GM12878 (cell line): ENCODE measurements at regions of chr22 and their contacts with region 1.

Region 1: DNA sequence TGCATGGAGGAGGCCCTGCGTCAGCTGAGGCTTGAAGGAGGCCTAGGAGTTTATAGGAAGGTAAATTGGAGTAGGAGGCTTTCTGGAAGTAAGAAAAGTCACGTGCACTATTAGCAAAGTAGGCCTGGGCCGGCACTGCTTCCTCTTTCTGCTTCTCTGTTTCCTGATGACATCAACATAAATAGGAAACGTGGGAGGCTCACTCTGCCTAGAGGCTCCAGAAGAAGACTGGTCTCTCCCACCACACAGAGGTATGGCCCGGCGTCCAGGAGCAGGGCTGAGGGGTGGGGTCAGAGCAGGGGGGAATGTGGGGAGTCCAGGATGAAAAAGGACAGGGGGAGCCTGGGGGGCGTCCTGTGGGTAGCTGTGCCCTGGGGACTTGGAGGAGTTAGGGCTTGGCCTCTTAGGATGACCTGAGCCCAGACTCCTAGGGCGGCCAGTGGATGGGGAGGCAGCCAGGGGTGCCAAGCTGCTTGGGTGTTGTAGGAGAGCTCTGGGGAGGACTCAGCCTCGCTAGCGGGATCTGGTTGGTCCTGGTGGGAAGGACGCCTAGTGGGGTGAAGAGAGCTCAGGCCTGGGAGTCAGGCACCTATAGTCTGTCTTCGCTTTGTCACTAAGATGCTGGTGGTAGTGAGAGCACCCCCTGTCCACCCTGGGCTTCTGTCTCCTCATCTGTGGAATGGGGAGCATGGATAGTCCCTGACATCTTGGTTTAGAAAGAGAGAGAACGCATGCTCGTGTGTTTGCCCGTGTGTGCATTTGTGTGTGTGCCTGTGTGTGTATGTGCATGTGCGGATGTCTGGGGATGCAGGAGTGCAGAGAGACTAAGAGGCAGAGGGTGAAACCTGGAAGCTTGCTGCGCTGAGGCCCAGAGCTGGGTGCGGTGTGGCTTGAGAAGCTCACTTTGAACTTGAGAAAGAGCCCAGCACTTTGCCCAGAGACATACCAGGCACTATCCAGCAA is at the start of gene CSF2RB:
- DNase-seq: no peak
- ATAC-seq: peak; percentile 78
- H3K4me3 ChIP-seq: peak within 1 kb of the TSS; percentile 67
- H3K27ac ChIP-seq: peak within 1 kb of the TSS; percentile 68
- H3K4me1 ChIP-seq: peaks cover 23% of the 10 kb centered on the region; the same call in 1 of the 2 replicates
- H3K27me3 ChIP-seq: no peaks in the 10 kb centered on the region
- CTCF ChIP-seq: no peak
- EP300 ChIP-seq: no peak
- POLR2A ChIP-seq: peak; percentile 6; the same call in 1 of the 2 replicates
- RAD21 ChIP-seq: no peak
- polyA plus RNA-seq, gene CSF2RB: 0.82 to 1.5 TPM

Region 2: DNA sequence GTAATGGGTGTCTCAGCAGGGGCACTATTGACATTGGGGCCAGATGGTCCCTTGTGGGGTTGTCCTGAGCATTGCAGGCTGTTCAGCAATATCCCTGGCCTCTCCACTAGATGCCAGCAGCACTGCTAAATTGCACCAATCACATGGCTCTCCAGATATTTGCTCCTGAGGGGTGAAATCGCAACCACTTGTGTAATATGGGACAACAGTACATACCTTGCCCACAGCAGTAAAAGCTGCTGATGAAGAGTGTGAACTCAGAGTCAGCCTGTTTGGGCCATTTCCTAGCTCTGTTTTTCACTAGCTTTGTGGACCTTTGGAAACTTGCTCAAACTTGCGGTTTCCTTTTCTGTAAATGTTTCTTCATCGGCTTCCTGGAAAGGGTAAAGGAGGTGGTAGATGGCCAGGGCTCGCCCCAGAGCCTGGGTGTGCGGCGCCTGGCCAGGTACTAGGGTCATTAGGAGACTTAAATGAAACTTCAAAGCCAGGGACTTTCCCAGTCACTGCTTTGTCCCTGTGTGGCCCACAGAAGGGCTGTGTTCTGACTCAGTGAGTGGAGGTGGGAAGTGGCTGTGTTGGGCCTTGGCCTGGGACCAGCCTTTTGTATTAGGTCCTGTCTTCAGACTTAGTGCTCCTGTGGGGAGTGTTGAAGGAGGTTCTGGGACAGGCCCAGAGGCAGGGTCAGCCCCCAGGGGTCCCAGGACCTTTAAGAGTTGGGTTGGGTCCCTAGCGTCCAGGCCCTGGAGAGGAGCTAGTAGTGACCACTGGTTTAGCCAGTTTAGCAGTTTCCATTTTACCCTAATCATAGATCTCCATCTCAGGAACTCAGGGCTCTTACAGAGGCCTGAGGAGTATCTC is 39.8 kb before region 1 on chr22:
- CTCF ChIA-PET with region 1: interaction called, 12 read pairs
- POLR2A ChIA-PET with region 1: interaction called, 4 read pairs
- RAD21 ChIA-PET with region 1: interaction called, 3 read pairs
- SMC1A ChIA-PET with region 1: interaction called, 6 read pairs
- in situ Hi-C with region 1: no loop called
- intact Hi-C with region 1: loop called (anchors 2 kb)
- DNase-seq: peak; percentile 69
- ATAC-seq: peak; percentile 96
- H3K4me3 ChIP-seq: no peak overlapping the region
- H3K27ac ChIP-seq: peak overlapping the region; percentile 59
- H3K4me1 ChIP-seq: peaks cover 16% of the 10 kb centered on the region
- H3K27me3 ChIP-seq: no peaks in the 10 kb centered on the region
- CTCF ChIP-seq: peak; percentile 55 to 64 (median 62)
- EP300 ChIP-seq: 0 out of 4 replicates have a peak, but pooled peaks have one; percentile 4 to 16
- POLR2A ChIP-seq: no peak
- RAD21 ChIP-seq: peak; percentile 63